Mammary epithelial cell (primary cell): ENCODE measurements at regions of chr5 and their contacts with region 1.

Region 1: GRCh38 chr5:143824851-143825720 is 13.1 kb downstream of the HMHB1 start:
- DNase-seq: peak; percentile 55
- H3K4me3 ChIP-seq: no peak overlapping the region
- H3K27ac ChIP-seq: no peak overlapping the region
- H3K4me1 ChIP-seq: no peaks in the 10 kb centered on the region
- H3K27me3 ChIP-seq: peaks cover 2% of the 10 kb centered on the region
- CTCF ChIP-seq: peak; percentile 94 to 97

Region 2: DNA sequence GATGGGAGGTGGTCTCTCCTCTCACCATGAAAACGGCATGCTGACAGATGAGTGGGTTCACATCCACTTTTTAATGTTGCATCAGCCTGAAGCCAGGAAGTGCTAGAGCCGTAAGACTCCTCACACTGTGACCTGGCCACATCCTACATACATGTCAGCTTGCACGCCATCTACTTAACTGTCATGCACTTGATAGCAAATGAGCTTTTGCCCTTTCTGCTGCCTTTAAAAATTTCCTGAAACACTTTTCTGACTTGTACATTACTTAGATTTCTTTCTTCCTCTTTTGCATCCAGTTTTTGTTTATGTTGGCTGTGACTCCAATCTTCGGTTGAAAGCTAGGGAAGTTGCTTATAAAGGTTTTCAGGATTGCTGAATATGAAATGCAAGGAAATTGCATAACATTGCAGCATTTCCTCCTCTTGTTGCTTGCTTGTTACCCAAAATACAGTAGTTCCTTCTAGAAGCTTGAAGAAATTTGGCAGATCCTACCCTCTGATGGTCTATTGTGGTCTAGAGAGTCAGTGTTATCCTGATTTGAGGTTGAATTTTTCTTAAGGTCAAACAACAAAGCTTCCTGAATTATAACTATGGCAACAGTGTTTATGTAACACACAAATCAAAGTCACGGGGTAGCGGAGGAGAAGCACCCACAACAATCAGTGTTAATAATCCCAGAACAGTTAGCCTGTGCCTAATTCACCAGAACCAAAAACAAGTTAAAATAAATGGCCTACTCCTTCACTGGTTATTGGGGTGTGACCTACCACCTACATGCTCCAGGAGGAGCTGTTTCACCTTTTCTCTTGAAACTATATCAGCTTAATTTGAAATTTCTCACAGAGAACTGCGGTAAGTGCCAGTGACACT is 822.4 kb before region 1 on chr5:
- CTCF ChIA-PET with region 1: no interaction called
- dilution Hi-C with region 1: no loop called
- in situ Hi-C with region 1: no loop called
- intact Hi-C with region 1: loop called (anchors 5 kb)
- DNase-seq: peak; percentile 59
- H3K4me3 ChIP-seq: no peak overlapping the region
- H3K27ac ChIP-seq: peak overlapping the region; percentile 71
- H3K4me1 ChIP-seq: peaks cover 17% of the 10 kb centered on the region
- H3K27me3 ChIP-seq: no peaks in the 10 kb centered on the region
- CTCF ChIP-seq: peak; percentile 59 to 72

Region 3: GRCh38 chr5:143290125-143290524 is 535.0 kb before region 1 on chr5:
- CTCF ChIA-PET with region 1: no interaction called
- dilution Hi-C with region 1: no loop called
- in situ Hi-C with region 1: no loop called
- intact Hi-C with region 1: loop called (anchors 5 kb)
- DNase-seq: no peak
- H3K4me3 ChIP-seq: no peak overlapping the region
- H3K27ac ChIP-seq: no peak overlapping the region
- H3K4me1 ChIP-seq: no peaks in the 10 kb centered on the region
- H3K27me3 ChIP-seq: no peaks in the 10 kb centered on the region
- CTCF ChIP-seq: no peak

Region 4: DNA sequence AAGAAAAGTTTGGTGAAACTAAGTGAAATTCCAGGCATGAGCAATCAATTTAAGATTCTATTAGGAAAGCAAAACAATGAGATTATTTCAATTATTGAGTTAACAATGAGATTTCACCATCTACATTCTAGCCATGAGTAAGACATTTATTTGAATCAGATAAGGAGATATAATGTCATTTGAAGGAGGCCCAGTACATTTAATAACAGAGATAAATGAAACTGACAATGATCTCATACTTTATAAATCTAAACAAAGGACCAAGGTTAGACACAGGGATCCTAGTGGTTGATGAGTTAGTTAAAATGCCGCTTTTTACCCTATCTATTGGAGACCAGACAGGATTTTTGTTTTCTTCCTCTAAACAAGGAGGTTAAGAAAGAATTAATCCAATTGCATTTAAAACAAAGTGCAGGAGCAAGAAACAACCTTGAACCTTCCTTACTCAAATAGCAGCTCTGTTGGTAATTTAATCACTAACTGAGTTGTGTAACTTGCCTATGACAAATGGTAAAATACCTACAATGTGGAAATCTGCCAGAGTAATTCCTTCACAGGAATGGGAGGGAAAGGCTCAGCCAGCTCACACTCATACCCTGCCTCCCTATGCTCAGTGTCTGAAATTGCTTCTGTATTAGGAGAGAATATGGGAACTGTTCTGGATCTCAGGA is 318.1 kb before region 1 on chr5:
- CTCF ChIA-PET with region 1: no interaction called
- dilution Hi-C with region 1: no loop called
- in situ Hi-C with region 1: loop called in 1 of 2 experiments (anchors 10 kb)
- intact Hi-C with region 1: no loop called
- DNase-seq: peak; percentile 90
- H3K4me3 ChIP-seq: no peak overlapping the region
- H3K27ac ChIP-seq: peak overlapping the region; percentile 15
- H3K4me1 ChIP-seq: peaks cover 18% of the 10 kb centered on the region
- H3K27me3 ChIP-seq: no peaks in the 10 kb centered on the region
- CTCF ChIP-seq: peak in 1 of 2 donors; percentile 49

Region 5: DNA sequence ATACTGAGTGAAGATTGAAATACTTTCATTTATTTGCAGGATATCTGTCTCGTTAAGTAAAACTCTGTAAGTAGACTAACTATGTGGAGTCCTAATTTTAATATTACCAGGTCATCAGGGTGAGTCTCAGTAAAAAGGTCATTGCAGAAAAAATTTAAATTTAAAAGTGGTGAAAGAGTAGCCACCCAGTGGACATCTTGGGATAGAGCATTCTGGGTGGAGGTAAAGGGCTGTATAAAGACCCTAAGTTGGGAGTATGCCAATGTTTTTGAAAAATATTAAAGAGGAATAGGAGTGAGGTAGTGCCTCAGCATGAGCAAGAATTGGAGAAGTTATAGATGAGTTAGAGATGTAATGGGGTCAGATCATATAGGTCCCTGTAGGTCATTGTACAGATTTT is 132.4 kb after region 1 on chr5:
- CTCF ChIA-PET with region 1: no interaction called
- dilution Hi-C with region 1: no loop called
- in situ Hi-C with region 1: no loop called
- intact Hi-C with region 1: loop called (anchors 2 kb)
- DNase-seq: no peak
- H3K4me3 ChIP-seq: no peak overlapping the region
- H3K27ac ChIP-seq: no peak overlapping the region
- H3K4me1 ChIP-seq: no peaks in the 10 kb centered on the region
- H3K27me3 ChIP-seq: no peaks in the 10 kb centered on the region
- CTCF ChIP-seq: peak; percentile 34 to 43

Region 6: DNA sequence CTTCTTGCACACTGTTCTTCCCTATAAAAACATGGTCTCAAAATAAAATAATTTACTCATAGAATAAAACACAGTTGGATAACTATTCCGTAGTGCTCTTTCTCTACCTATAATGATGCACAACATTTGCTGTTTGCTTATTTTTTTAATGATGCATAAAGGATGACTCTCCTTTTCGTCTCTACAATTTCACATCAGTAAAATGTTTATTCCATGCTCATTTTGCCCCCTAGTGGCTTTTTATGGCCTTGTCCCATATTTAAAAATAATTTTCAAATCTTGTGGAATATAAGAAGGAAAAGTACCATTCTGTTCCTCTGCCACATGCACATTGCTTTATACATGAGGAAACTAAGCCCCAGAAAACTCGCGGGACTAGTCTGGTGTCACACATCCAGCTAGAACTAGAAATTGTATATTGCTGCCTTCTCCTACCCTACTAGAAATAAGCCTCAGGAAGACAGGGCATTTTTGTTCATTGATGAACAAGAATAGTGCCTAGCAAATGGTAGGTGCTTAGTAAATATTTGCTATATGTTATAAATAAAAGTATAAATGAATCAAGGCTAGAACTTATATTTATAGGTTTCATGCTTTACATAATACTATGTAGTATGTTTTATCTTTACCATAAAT is 358.3 kb after region 1 on chr5:
- CTCF ChIA-PET with region 1: no interaction called
- dilution Hi-C with region 1: no loop called
- in situ Hi-C with region 1: no loop called
- intact Hi-C with region 1: loop called (anchors 1 kb)
- DNase-seq: peak; percentile 41
- H3K4me3 ChIP-seq: no peak overlapping the region
- H3K27ac ChIP-seq: no peak overlapping the region
- H3K4me1 ChIP-seq: peaks cover 8% of the 10 kb centered on the region
- H3K27me3 ChIP-seq: no peaks in the 10 kb centered on the region
- CTCF ChIP-seq: peak; percentile 62 to 73